ENCODE measurements at regions of chr2 and their contacts with region 1.

Region 1: DNA sequence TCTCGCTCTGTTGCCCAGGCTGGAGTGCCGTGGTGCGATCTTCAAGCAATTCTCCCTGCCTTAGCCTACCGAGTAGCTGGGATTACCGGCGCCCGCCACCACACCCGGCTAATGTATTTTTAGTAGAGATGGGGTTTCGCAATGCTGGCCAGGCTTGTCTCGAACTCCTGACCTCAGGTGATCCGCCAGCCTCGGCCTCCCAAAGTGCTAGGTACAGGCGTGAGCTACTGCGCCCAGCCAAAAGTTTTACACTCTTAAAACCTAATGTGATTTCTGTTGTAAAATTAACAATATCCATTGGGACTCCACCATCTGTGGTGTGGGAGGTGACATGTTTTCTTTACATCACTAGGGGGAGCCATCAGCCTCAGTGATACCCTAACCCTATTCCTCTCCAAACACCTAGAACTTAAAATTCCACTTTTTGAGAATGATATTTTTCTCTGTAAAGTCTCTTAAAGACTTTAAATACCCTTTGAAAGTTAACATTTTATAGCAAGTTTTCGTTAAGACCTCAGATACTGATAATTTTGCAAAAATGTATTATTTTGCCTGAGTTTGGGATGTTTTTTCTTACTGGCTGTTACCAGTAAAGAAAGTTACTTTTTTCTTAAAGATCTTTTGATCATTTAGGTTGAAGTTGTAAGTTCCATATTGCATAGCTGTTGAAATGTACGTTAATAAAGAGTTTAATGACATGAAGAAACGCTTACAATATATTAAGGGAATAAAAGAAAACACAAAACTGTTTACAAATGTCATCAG is 11.6 kb upstream of the EIF2AK2 start:
- DNase-seq: peak; percentile 43
- ATAC-seq: no peak
- H3K4me3 Mint-ChIP-seq: no peak overlapping the region
- H3K27ac Mint-ChIP-seq: no peak overlapping the region
- H3K4me1 Mint-ChIP-seq: no peaks in the 10 kb centered on the region
- H3K27me3 Mint-ChIP-seq: peaks cover under 1% of the 10 kb centered on the region

Region 2: GRCh38 chr2:37180006-37180639 is 11.7 kb after region 1 on chr2:
- CTCF ChIA-PET with region 1: interaction called, 18 read pairs
- POLR2A ChIA-PET with region 1: interaction called, 3 read pairs
- DNase-seq: no peak
- ATAC-seq: no peak
- H3K4me3 Mint-ChIP-seq: no peak overlapping the region
- H3K27ac Mint-ChIP-seq: no peak overlapping the region
- H3K4me1 Mint-ChIP-seq: no peaks in the 10 kb centered on the region
- H3K27me3 Mint-ChIP-seq: peaks cover 25% of the 10 kb centered on the region

Region 3: GRCh38 chr2:37201766-37202165 is 33.4 kb after region 1 on chr2:
- CTCF ChIA-PET with region 1: interaction called, 10 read pairs
- POLR2A ChIA-PET with region 1: interaction called, 4 read pairs
- DNase-seq: peak; percentile 67
- ATAC-seq: peak; percentile 83
- H3K4me3 Mint-ChIP-seq: peak overlapping the region; percentile 31
- H3K27ac Mint-ChIP-seq: peak overlapping the region; percentile 69
- H3K4me1 Mint-ChIP-seq: peaks cover 36% of the 10 kb centered on the region
- H3K27me3 Mint-ChIP-seq: no peaks in the 10 kb centered on the region

Region 4: GRCh38 chr2:37337642-37338310 is 169.4 kb after region 1 on chr2:
- CTCF ChIA-PET with region 1: no interaction called
- POLR2A ChIA-PET with region 1: no interaction called
- DNase-seq: no peak
- ATAC-seq: no peak
- H3K4me3 Mint-ChIP-seq: no peak overlapping the region
- H3K27ac Mint-ChIP-seq: no peak overlapping the region
- H3K4me1 Mint-ChIP-seq: no peaks in the 10 kb centered on the region
- H3K27me3 Mint-ChIP-seq: peaks cover 46% of the 10 kb centered on the region

Measured in activated CD8-positive, alpha-beta T cell treated with anti-CD3 and anti-CD28 coated beads, Interleukin-2, amount 10 ng/mL, durations not matched to agents 7 days and 5 days (primary cell).